ENCODE measurements at regions of chr9 and their contacts with region 1.

Region 1: DNA sequence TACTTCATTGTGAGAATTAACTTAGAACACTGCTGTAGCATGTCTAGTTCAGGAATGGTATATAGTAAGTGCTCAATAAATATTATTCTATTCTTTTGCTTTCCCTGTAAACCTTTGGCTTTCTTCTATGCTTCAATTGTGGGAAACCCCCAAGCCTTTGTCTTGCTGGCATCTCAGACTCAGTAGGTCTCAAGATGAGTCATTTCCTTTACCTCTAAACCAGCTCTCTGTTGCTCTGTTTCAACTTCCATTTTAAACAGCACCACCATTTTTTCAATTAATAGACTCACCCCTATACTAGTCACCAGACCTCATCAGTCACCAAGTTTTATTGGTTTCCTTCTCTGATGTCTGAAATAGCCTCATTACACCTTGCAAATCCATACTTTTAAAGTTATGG is 43.5 kb downstream of the DMAC1 start:
- DNase-seq: peak; percentile 30
- ATAC-seq: peak; percentile 99
- H3K4me3 Mint-ChIP-seq: no peak overlapping the region
- H3K27ac Mint-ChIP-seq: peak overlapping the region; percentile 74
- H3K4me1 Mint-ChIP-seq: peaks cover 19% of the 10 kb centered on the region
- H3K27me3 Mint-ChIP-seq: no peaks in the 10 kb centered on the region

Region 2: GRCh38 chr9:7834531-7834930 is 78.4 kb after region 1 on chr9:
- CTCF ChIA-PET with region 1: no interaction called
- POLR2A ChIA-PET with region 1: no interaction called
- intact Hi-C with region 1: no loop called
- DNase-seq: no peak
- ATAC-seq: no peak
- H3K4me3 Mint-ChIP-seq: no peak overlapping the region
- H3K27ac Mint-ChIP-seq: no peak overlapping the region
- H3K4me1 Mint-ChIP-seq: no peaks in the 10 kb centered on the region
- H3K27me3 Mint-ChIP-seq: no peaks in the 10 kb centered on the region

Region 3: DNA sequence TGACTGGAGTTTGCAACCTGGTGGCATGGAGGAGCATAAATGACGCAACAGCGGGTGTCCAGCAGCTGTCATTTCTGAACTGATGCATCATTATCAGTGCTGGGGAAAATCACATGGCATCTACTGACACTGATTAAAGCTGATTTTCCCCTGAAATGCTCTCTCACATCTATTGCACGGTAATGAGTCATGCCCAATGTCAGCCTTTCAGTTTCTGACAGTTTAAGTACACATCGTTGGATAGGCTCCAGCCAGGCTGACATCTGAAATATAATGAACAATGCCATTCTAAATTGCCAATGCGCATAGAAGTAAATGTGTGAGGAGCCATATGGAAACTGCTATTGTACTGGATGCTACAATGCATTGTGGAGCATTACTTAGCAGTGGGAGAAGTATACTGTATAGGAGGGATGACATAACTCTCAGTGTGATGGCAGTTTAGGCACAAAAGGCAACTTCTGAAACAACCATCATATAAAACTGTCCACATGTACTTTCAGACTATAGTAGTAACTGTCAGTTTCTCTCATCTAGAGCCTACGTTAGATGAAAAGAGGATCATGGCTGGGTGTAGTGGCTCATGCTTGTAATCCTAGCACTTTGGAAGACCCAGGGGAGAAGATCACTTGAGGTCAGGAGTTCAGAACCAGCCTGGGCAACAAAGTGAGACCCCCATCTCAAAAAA is 432.8 kb after region 1 on chr9:
- CTCF ChIA-PET with region 1: no interaction called
- POLR2A ChIA-PET with region 1: no interaction called
- intact Hi-C with region 1: loop called in 1 of 2 experiments (anchors 2 kb)
- DNase-seq: peak; percentile 61
- ATAC-seq: peak; percentile 94
- H3K4me3 Mint-ChIP-seq: no peak overlapping the region
- H3K27ac Mint-ChIP-seq: no peak overlapping the region
- H3K4me1 Mint-ChIP-seq: peaks cover 13% of the 10 kb centered on the region
- H3K27me3 Mint-ChIP-seq: peaks cover 2% of the 10 kb centered on the region